HAP-1 (cell line): ENCODE measurements at regions of chr9 and their contacts with region 1.

Region 1: GRCh38 chr9:35489313-35490154 is at the start of gene RUSC2:
- DNase-seq: peak; percentile 72 to 92
- H3K4me3 ChIP-seq: peak within 1 kb of the TSS; percentile 53
- H3K4me1 ChIP-seq: peaks cover 19% of the 10 kb centered on the region
- H3K27me3 ChIP-seq: no peaks in the 10 kb centered on the region

Region 2: DNA sequence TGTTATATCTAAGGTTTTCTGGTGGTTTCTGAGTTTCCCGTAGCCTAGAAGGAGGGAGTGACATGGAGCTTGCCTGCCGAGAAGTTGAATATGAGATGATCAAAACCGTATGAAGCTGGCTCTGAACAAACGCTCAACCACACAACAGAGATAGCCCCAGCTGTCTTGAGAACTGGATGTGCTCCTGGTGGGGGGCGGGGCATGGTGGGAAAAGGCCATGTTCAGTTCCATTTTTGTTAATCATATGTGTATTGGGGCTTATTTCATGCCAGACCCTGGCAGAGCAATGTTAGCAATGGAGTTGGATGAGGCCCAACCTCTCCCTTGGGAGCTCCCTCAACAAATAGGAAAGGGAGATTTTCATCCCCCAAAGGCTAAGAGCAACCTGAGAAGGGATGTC is 803.3 kb before region 1 on chr9:
- in situ Hi-C with region 1: no loop called
- DNase-seq: no peak
- H3K4me3 ChIP-seq: no peak overlapping the region
- H3K4me1 ChIP-seq: no peaks in the 10 kb centered on the region
- H3K27me3 ChIP-seq: no peaks in the 10 kb centered on the region; the same call in 1 of the 2 replicates

Region 3: DNA sequence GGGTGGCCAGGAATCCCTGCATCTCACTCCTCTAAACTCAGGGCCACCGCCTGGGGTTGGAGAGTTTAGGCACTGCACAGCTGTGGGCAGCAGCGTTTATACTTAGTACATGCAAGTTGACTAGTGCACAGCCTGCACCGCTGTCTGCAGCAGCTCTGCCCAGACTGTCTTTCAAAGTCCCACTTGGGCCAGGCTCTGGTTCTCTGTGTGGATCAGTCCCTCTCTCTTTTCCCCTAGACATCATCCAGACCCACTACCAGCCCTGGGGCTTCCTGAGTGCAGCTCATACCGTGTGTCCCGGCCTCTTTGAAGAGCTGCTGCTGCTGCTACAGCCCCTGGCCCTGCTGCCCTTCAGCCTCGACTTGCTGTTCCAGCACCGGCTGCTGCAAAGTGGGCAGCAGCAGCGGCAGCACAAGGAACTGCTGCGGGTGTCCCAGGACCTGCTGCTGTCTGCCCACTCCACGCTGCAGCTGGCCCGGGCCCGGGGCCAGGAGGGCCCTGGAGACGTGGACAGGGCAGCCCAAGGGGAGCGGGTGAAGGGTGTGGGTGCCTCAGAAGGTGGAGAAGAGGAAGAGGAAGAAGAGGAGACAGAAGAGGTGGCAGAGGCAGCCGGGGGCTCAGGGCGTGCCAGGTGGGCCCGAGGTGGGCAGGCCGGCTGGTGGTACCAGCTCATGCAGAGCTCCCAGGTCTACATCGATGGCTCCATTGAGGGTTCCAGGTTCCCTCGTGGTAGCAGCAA is 70.4 kb after region 1 on chr9:
- in situ Hi-C with region 1: loop called (anchors 5 kb)
- DNase-seq: no peak
- H3K4me3 ChIP-seq: no peak overlapping the region
- H3K4me1 ChIP-seq: no peaks in the 10 kb centered on the region
- H3K27me3 ChIP-seq: no peaks in the 10 kb centered on the region